Motor neuron (in vitro differentiated cells): ENCODE measurements at regions of chr7 and their contacts with region 1.

Region 1: DNA sequence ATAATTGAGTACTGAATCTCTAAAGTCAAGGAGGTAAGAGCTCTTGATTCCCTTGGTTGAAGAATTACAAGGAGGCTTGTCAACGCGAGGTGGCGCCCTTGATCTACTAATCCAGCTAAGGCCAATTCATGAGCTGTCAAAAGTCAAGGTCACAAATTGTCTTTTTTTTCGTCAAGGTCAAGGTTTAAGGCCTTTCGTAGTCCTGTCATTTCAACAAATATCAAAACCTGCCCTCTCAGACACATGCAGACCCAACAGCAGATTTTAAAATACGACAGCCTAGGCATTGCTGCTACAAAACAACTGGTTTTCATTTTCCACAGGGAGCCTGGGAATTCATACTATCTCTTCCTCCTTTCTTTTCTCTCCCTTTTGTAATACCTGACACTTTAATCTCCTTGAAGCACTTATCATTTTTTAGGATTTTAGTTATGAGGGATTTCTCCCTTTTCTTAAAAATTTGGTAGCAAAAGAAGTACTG is 3.6 kb downstream of the HOXA13 start:
- ATAC-seq: peak in 1 of 8 experiments; percentile 10
- H3K4me3 ChIP-seq: no peak overlapping the region
- H3K27ac ChIP-seq: no peak overlapping the region
- H3K4me1 ChIP-seq: peaks cover 0 to 3% of the 10 kb centered on the region in 2 donors

Region 2: GRCh38 chr7:25862260-25863037 is 1333.9 kb before region 1 on chr7:
- in situ Hi-C with region 1: loop called in 3 of 9 experiments (anchors 25 kb)
- ATAC-seq: peak; percentile 86 to 93 (median 92)
- H3K4me3 ChIP-seq: peak overlapping the region; percentile 7 to 25 (median 14)
- H3K27ac ChIP-seq: no peak overlapping the region
- H3K4me1 ChIP-seq: peaks cover 0 to 2% of the 10 kb centered on the region in 2 donors

Region 3: DNA sequence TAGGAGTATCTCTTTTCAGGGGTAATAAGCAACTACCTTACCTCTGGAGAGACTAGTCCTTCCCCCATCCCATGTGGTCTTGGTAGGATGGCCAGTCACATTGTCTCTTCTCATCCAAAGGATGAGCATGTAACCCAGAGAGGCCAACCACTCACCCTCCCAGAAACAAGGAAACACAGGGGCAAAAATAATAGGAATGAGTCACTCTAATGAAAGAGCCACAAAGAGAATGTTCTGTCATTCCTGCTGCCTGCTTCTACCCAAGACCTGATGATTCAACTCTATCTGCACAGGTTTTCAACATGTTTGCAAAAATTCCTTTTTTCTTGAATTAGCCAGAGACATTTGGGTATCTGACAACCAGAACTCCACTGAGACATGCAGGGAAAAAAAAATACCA is 1143.6 kb before region 1 on chr7:
- in situ Hi-C with region 1: no loop called
- ATAC-seq: peak in 3 of 8 experiments; percentile 33 to 63 (median 58)
- H3K4me3 ChIP-seq: no peak overlapping the region
- H3K27ac ChIP-seq: no peak overlapping the region
- H3K4me1 ChIP-seq: no peaks in the 10 kb centered on the region

Region 4: GRCh38 chr7:27064159-27064558 is 132.2 kb before region 1 on chr7:
- in situ Hi-C with region 1: no loop called
- ATAC-seq: peak in 1 of 8 experiments; percentile 32
- H3K4me3 ChIP-seq: no peak overlapping the region
- H3K27ac ChIP-seq: no peak overlapping the region
- H3K4me1 ChIP-seq: peaks cover 3 to 12% of the 10 kb centered on the region in 2 donors

Region 5: DNA sequence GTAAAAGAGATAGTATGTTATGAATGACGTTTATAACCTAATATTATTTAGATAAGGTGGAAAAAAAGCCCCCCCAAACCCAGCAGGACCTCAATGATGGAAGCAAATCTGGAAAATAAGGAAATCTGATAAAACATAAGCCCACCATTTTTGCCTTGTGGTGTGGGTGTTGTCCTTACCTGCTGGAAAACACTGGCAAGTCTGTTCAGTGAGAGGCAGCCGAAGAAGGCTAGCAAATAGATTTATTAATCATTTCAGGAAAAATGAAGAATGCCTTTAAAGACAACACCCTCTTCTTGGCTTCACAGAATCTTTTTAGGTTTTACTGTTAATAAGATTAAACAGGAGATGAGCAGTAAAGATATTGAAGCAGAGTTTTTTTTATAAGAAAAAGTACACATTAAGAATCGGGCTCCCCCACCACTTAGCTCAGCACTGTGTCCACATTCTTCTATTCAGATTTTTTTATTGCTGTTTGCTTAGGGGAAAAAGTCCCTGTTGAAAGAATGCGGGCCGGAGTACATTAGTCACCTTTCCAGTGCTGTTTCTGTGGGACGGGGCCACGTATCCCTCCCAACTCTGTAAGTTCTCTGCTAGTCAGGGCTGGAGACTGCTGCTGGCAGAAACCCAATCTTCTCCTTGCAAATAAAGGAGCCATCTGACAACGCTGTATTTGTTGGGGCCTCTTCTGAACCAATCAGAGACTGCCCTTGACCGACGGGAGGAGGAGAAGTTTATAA is 150.4 kb after region 1 on chr7:
- in situ Hi-C with region 1: no loop called
- ATAC-seq: peak; percentile 47 to 99 (median 90)
- H3K4me3 ChIP-seq: no peak overlapping the region
- H3K27ac ChIP-seq: no peak overlapping the region
- H3K4me1 ChIP-seq: peaks cover 5 to 22% of the 10 kb centered on the region in 2 donors

Region 6: DNA sequence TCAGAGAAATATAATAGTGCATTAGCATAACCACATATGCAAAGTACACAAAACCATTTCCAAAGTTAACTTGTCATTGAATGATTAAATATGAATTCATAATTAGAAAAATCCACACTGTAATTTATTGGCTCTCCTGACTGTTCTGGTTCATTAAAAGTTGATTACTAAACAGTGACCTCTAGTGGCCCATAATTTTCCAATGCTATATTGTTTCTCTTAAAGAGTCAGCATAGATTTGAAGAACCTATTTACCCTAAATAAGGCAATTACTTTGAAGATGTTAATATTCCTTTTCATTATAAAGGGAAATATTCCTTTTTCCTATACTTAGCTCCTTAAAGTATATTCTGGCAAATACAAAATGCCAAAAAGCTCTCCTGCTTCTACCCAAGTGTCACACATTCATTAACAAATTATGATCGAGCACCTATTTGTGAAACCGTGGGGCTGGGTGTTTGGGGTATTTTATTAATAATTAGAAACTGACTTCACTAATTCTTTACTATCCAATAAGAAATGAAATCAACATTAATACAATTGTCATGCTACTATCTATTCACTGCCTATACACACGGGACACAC is 380.1 kb after region 1 on chr7:
- in situ Hi-C with region 1: loop called in 3 of 9 experiments (anchors 10 to 25 kb)
- ATAC-seq: peak in 3 of 8 experiments; percentile 65 to 78 (median 65)
- H3K4me3 ChIP-seq: no peak overlapping the region
- H3K27ac ChIP-seq: no peak overlapping the region
- H3K4me1 ChIP-seq: peaks cover 5 to 8% of the 10 kb centered on the region in 2 donors

Region 7: DNA sequence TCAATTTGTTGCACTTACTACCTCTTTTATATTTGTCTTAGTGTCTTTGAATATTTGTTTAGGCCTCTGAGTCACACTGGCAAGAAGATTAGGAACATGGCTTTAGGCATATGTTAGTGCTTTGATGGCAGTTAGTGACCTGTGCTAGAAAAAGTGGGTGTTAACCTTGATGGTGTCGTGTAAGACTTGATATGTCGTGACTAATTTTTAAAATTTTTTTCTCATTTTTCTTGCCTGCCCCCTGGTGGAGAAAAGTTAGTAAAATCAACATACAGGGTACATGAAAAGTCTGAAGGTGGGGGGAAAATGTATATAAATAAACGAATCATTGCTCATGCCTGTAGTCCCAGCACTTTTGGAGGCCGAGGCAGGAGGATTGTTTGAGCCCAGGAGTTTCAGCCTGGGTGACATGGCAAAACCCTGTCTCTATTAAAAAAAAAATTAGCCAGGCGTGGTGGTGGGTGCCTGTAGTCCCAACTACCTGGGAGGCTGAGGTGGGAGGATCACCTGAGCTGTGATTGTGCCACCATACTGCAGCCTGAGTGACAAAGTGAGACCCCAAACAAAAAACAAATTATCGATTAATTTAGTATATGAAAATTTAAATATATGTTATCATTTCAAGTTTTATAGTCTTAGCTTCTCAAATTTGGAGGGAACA is 588.2 kb after region 1 on chr7:
- in situ Hi-C with region 1: loop called in 2 of 9 experiments (anchors 25 kb)
- ATAC-seq: peak in 3 of 8 experiments; percentile 43 to 98 (median 94)
- H3K4me3 ChIP-seq: no peak overlapping the region
- H3K27ac ChIP-seq: no peak overlapping the region
- H3K4me1 ChIP-seq: no peaks in the 10 kb centered on the region

Region 8: GRCh38 chr7:27921081-27921836 is 724.9 kb after region 1 on chr7:
- in situ Hi-C with region 1: loop called in 5 of 9 experiments (anchors 10 to 25 kb)
- ATAC-seq: peak; percentile 81 to 98 (median 88)
- H3K4me3 ChIP-seq: no peak overlapping the region
- H3K27ac ChIP-seq: no peak overlapping the region
- H3K4me1 ChIP-seq: peaks cover 0 to 3% of the 10 kb centered on the region in 2 donors

Region 9: GRCh38 chr7:27933671-27934565 is 737.6 kb after region 1 on chr7:
- in situ Hi-C with region 1: loop called in 2 of 9 experiments (anchors 10 to 25 kb)
- ATAC-seq: peak in 2 of 8 experiments; percentile 79 to 98
- H3K4me3 ChIP-seq: no peak overlapping the region
- H3K27ac ChIP-seq: no peak overlapping the region
- H3K4me1 ChIP-seq: peaks cover 11 to 12% of the 10 kb centered on the region in 2 donors

Region 10: GRCh38 chr7:28062197-28062991 is 866.1 kb after region 1 on chr7:
- in situ Hi-C with region 1: loop called in 1 of 9 experiments (anchors 25 kb)
- ATAC-seq: peak; percentile 78 to 100 (median 98)
- H3K4me3 ChIP-seq: no peak overlapping the region
- H3K27ac ChIP-seq: no peak overlapping the region
- H3K4me1 ChIP-seq: peaks cover 0 to 16% of the 10 kb centered on the region in 2 donors